Common myeloid progenitor, CD34-positive (primary cell): ENCODE measurements at regions of chr14 and their contacts with region 1.

Region 1: DNA sequence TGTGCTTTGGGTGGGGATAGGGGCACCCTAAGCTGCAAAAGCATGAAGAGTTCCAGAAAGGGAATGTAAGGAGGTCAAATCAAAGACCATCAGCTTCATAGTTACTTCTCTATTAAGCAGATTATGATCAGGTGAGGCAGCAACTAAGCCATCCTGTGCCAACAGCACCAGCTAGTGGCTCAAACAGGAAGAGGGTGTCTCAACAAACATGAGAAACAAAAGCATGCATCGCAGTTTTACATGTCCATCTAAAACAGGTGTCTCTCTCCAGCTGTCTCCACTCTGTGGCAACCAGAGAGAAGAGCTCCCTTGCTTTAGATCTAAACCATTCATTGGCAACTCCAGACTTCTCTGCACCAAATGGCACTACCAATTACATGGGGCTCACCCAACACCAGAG is 52.9 kb downstream of the ACTN1 start:
- DNase-seq: peak; percentile 33 to 74 (median 71)
- H3K4me3 ChIP-seq: no peak overlapping the region
- H3K27ac ChIP-seq: no peak overlapping the region
- H3K4me1 ChIP-seq: peaks cover 0 to 53% (median 44%) of the 10 kb centered on the region in 4 experiments
- H3K27me3 ChIP-seq: no peaks in the 10 kb centered on the region

Region 2: GRCh38 chr14:68939893-68940613 is 13.8 kb after region 1 on chr14:
- CTCF ChIA-PET with region 1: interaction called, 10 read pairs
- POLR2A ChIA-PET with region 1: no interaction called
- DNase-seq: no peak
- H3K4me3 ChIP-seq: no peak overlapping the region
- H3K27ac ChIP-seq: no peak overlapping the region
- H3K4me1 ChIP-seq: peaks cover 0 to 45% (median 10%) of the 10 kb centered on the region in 4 experiments
- H3K27me3 ChIP-seq: no peaks in the 10 kb centered on the region

Region 3: GRCh38 chr14:69117020-69117767 is 191.0 kb after region 1 on chr14:
- CTCF ChIA-PET with region 1: no interaction called
- POLR2A ChIA-PET with region 1: no interaction called
- DNase-seq: no peak
- H3K4me3 ChIP-seq: no peak overlapping the region
- H3K27ac ChIP-seq: no peak overlapping the region
- H3K4me1 ChIP-seq: no peaks in the 10 kb centered on the region
- H3K27me3 ChIP-seq: no peaks in the 10 kb centered on the region